Psoas muscle (tissue), 8 donors: ENCODE measurements at regions of chr1 and their contacts with region 1.

Region 1: DNA sequence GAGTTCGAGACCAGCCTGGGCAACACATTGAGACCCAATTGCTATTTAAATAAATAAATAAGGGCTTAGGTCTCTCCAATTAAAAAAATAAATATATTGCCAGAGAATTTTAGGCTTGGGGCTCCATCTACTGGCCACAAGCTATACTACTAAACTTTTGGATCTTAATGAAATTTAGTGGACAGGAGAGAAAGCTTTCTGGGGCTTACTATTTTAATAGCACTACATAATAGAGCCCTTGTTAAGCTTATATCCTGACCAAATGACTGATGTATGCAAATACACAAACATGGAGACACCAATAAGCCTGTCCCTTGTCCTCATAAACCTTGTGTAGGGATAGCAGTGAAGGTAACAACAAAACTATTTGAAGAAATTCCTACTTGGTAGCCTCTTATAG is 18.4 kb downstream of the CCT3 start:
- DNase-seq: no peak
- ATAC-seq: peak in 1 of 4 donors; percentile 46
- H3K4me3 ChIP-seq: no peak overlapping the region
- H3K27ac ChIP-seq: no peak overlapping the region
- H3K4me1 ChIP-seq: no peaks in the 10 kb centered on the region
- H3K27me3 ChIP-seq: no peaks in the 10 kb centered on the region
- CTCF ChIP-seq: peak; percentile 47

Region 2: GRCh38 chr1:156268336-156268735 is 51.3 kb before region 1 on chr1:
- intact Hi-C with region 1: loop called in 1 of 2 experiments (anchors 5 kb)
- DNase-seq: no peak
- ATAC-seq: no peak
- H3K4me3 ChIP-seq: no peak overlapping the region
- H3K27ac ChIP-seq: no peak overlapping the region
- H3K4me1 ChIP-seq: no peaks in the 10 kb centered on the region
- H3K27me3 ChIP-seq: no peaks in the 10 kb centered on the region
- CTCF ChIP-seq: no peak

Region 3: GRCh38 chr1:156435545-156436141 is 116.0 kb after region 1 on chr1:
- intact Hi-C with region 1: no loop called
- DNase-seq: no peak
- ATAC-seq: peak in 2 of 4 donors; percentile 43 to 45
- H3K4me3 ChIP-seq: peak overlapping the region; percentile 55
- H3K27ac ChIP-seq: no peak overlapping the region
- H3K4me1 ChIP-seq: no peaks in the 10 kb centered on the region
- H3K27me3 ChIP-seq: peaks cover 3 to 94% (median 56%) of the 10 kb centered on the region in 3 donors
- CTCF ChIP-seq: no peak